ENCODE measurements at regions of chr5 and their contacts with region 1.

Region 1: GRCh38 chr5:168851902-168852321 is 272.7 kb upstream of the PANK3 start:
- DNase-seq: peak; percentile 65
- H3K4me3 Mint-ChIP-seq: peak overlapping the region; percentile 68
- H3K27ac Mint-ChIP-seq: peak overlapping the region; percentile 93
- H3K4me1 Mint-ChIP-seq: peaks cover 54% of the 10 kb centered on the region
- H3K27me3 Mint-ChIP-seq: no peaks in the 10 kb centered on the region

Region 2: DNA sequence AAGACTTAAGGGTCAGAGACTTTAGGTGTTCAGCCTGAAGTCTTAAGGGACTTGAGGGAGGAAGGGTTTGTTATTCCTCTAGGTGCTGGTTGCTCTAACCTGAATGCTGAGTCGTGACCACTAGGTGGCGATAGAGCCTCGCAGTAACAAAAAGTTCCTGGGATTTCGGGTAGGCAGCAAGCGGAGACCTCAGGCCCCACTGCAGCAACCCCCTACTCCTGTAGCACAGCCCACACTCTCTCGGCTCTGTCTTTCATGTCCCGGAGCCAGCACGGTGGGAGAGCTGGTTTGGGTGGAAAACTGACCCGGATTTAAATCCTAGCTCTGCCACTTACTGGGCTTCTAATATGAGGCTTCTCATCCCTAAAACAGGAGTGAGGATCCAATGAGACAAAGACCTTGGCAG is 172.4 kb before region 1 on chr5:
- intact Hi-C with region 1: loop called (anchors 5 kb)
- DNase-seq: peak; percentile 42
- H3K4me3 Mint-ChIP-seq: no peak overlapping the region
- H3K27ac Mint-ChIP-seq: no peak overlapping the region
- H3K4me1 Mint-ChIP-seq: peaks cover 21% of the 10 kb centered on the region
- H3K27me3 Mint-ChIP-seq: no peaks in the 10 kb centered on the region

Region 3: GRCh38 chr5:168770036-168770498 is 81.8 kb before region 1 on chr5:
- intact Hi-C with region 1: no loop called
- DNase-seq: no peak
- H3K4me3 Mint-ChIP-seq: no peak overlapping the region
- H3K27ac Mint-ChIP-seq: no peak overlapping the region
- H3K4me1 Mint-ChIP-seq: no peaks in the 10 kb centered on the region
- H3K27me3 Mint-ChIP-seq: no peaks in the 10 kb centered on the region

Region 4: GRCh38 chr5:168793841-168794837 is 57.8 kb before region 1 on chr5:
- intact Hi-C with region 1: loop called (anchors 1 kb)
- DNase-seq: no peak
- H3K4me3 Mint-ChIP-seq: no peak overlapping the region
- H3K27ac Mint-ChIP-seq: peak overlapping the region; percentile 95
- H3K4me1 Mint-ChIP-seq: peaks cover 56% of the 10 kb centered on the region
- H3K27me3 Mint-ChIP-seq: no peaks in the 10 kb centered on the region

Region 5: DNA sequence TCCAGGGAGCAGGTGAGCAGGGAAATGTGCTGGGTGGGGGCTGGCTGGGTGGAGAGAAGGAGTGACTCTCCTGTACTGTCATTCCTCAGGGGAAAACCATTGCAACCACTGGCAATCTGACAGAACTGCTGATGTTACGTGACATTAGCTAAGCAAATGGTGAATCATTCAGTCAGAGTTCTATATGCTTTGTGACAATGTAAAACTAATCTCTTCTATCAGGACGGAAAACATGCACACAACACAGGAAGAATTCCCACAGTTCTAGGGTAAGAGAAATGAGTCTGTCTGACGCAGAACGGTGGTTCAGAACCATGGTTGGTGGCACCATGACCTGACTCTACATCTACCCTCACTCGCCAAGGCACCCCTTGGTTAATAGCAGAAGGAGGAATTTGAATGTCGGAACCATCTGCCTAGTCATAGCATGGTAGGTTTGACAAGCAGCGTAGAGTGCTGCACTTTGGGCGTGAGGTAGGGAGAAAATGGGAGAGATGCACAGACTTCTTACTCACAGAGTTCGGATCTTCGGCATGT is 29.1 kb before region 1 on chr5:
- intact Hi-C with region 1: loop called (anchors 1 kb)
- DNase-seq: no peak
- H3K4me3 Mint-ChIP-seq: peak overlapping the region; percentile 65
- H3K27ac Mint-ChIP-seq: peak overlapping the region; percentile 94
- H3K4me1 Mint-ChIP-seq: peaks cover 33% of the 10 kb centered on the region
- H3K27me3 Mint-ChIP-seq: no peaks in the 10 kb centered on the region

Region 6: GRCh38 chr5:168890816-168891812 is 39.2 kb after region 1 on chr5:
- intact Hi-C with region 1: no loop called
- DNase-seq: no peak
- H3K4me3 Mint-ChIP-seq: no peak overlapping the region
- H3K27ac Mint-ChIP-seq: no peak overlapping the region
- H3K4me1 Mint-ChIP-seq: peaks cover 22% of the 10 kb centered on the region
- H3K27me3 Mint-ChIP-seq: peaks cover 3% of the 10 kb centered on the region

Region 7: DNA sequence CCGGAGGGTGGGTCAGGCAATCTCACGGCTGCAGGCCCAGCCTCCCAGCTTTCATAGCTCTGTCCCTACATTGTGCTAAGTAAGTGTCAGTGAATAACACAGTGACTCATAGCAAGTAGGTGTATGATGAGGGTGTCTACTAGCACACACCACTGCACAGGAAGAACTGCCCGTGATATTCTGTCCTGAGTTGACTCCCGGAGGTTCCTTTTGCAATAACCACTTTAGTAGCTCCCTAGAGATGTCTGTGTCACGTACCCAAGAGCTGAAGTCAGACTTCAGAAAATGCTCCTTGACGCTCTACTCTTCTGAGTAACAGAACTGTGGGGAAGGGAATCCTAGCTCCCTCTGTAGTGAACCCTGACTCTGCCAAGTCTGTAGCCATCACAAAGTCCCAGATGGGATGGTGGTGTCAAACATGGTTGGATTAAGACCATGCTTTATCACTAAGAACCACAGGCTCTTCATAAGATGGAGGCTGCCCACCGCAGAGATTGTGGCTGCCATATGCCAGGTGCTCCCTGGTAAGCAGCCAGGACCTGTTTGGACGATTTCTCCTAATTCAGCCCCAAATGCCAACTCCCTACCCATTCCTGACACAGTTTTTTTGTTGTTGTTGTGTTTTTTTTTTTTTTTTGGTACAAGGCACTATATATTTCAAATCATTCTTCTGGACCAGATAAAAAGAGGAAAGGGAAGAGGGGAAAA is 79.9 kb after region 1 on chr5:
- intact Hi-C with region 1: loop called (anchors 5 kb)
- DNase-seq: no peak
- H3K4me3 Mint-ChIP-seq: no peak overlapping the region
- H3K27ac Mint-ChIP-seq: peak overlapping the region; percentile 40
- H3K4me1 Mint-ChIP-seq: peaks cover 14% of the 10 kb centered on the region
- H3K27me3 Mint-ChIP-seq: no peaks in the 10 kb centered on the region

Region 8: DNA sequence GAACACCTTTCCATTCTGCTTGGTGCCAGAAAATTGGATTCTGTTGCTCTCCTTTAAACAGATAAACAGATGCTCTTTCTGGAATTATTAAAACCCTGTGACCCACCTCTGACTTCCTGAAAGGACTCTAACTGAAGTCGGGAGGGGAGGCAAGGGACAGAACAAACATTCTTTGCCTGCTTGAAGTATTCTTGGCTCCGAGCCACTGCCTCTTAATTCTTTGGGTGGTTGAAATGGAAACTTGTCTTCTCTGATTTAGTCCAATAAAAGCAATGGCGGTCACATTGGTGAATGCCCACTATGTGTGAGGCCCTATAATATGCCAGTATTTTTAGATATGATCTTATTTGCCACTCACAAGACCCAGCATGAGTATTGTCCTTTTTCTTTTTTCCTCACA is 212.2 kb after region 1 on chr5:
- intact Hi-C with region 1: no loop called
- DNase-seq: no peak
- H3K4me3 Mint-ChIP-seq: no peak overlapping the region
- H3K27ac Mint-ChIP-seq: no peak overlapping the region
- H3K4me1 Mint-ChIP-seq: no peaks in the 10 kb centered on the region
- H3K27me3 Mint-ChIP-seq: peaks cover 9% of the 10 kb centered on the region

Measured in activated T-helper 2 cell treated with anti-CD3 and anti-CD28 coated beads, Interferon-gamma antibody, Interleukin-2, Interleukin-4, amounts not matched to agents 10 μg/mL and 5 μg/mL and 100 μg/mL, durations not matched to agents 14 hours and 24 hours and 36 hours (primary cell).